ENCODE measurements at regions of chr12 and their contacts with region 1.

Region 1: GRCh38 chr12:42469355-42470175 is 120.0 kb downstream of the PRICKLE1 start:
- DNase-seq: peak; percentile 93
- ATAC-seq: peak; percentile 91
- H3K4me3 ChIP-seq: peak overlapping the region; percentile 23 to 45 (median 33)
- H3K4me3 Mint-ChIP-seq: peak overlapping the region; percentile 81
- H3K27ac ChIP-seq: peak overlapping the region; percentile 81 to 87
- H3K27ac Mint-ChIP-seq: peak overlapping the region; percentile 93
- H3K4me1 ChIP-seq: peaks cover 69 to 78% of the 10 kb centered on the region in 2 donors
- H3K4me1 Mint-ChIP-seq: peaks cover 76% of the 10 kb centered on the region
- H3K27me3 ChIP-seq: no peaks in the 10 kb centered on the region
- H3K27me3 Mint-ChIP-seq: no peaks in the 10 kb centered on the region
- CTCF ChIP-seq: no peak

Region 2: GRCh38 chr12:42144408-42145196 is 325.0 kb before region 1 on chr12 and contains the start of gene GXYLT1:
- CTCF ChIA-PET with region 1: interaction called, 3 read pairs
- POLR2A ChIA-PET with region 1: no interaction called
- intact Hi-C with region 1: loop called (anchors 5 kb)
- DNase-seq: peak; percentile 90
- ATAC-seq: peak; percentile 91
- H3K4me3 ChIP-seq: peak within 1 kb of the TSS; percentile 60 to 78 (median 74)
- H3K4me3 Mint-ChIP-seq: peak within 1 kb of the TSS; percentile 94
- H3K27ac ChIP-seq: peak within 1 kb of the TSS in 1 of 2 donors; percentile 68
- H3K27ac Mint-ChIP-seq: peak within 1 kb of the TSS; percentile 88
- H3K4me1 ChIP-seq: peaks cover 21 to 27% of the 10 kb centered on the region in 2 donors
- H3K4me1 Mint-ChIP-seq: peaks cover 40% of the 10 kb centered on the region
- H3K27me3 ChIP-seq: no peaks in the 10 kb centered on the region
- H3K27me3 Mint-ChIP-seq: no peaks in the 10 kb centered on the region
- CTCF ChIP-seq: no peak
- total RNA-seq, gene GXYLT1: 9.4 and 10.4 TPM in 2 replicates

Region 3: GRCh38 chr12:42237052-42237852 is 232.3 kb before region 1 on chr12:
- CTCF ChIA-PET with region 1: no interaction called
- POLR2A ChIA-PET with region 1: no interaction called
- intact Hi-C with region 1: loop called (anchors 5 kb)
- DNase-seq: peak; percentile 84
- ATAC-seq: peak; percentile 74
- H3K4me3 ChIP-seq: peak overlapping the region; percentile 48 to 84 (median 66)
- H3K4me3 Mint-ChIP-seq: peak overlapping the region; percentile 98
- H3K27ac ChIP-seq: peak overlapping the region; percentile 28 to 74
- H3K27ac Mint-ChIP-seq: peak overlapping the region; percentile 95
- H3K4me1 ChIP-seq: peaks cover 15 to 27% of the 10 kb centered on the region in 2 donors
- H3K4me1 Mint-ChIP-seq: peaks cover 35% of the 10 kb centered on the region
- H3K27me3 ChIP-seq: no peaks in the 10 kb centered on the region
- H3K27me3 Mint-ChIP-seq: no peaks in the 10 kb centered on the region
- CTCF ChIP-seq: peak; percentile 53

Region 4: DNA sequence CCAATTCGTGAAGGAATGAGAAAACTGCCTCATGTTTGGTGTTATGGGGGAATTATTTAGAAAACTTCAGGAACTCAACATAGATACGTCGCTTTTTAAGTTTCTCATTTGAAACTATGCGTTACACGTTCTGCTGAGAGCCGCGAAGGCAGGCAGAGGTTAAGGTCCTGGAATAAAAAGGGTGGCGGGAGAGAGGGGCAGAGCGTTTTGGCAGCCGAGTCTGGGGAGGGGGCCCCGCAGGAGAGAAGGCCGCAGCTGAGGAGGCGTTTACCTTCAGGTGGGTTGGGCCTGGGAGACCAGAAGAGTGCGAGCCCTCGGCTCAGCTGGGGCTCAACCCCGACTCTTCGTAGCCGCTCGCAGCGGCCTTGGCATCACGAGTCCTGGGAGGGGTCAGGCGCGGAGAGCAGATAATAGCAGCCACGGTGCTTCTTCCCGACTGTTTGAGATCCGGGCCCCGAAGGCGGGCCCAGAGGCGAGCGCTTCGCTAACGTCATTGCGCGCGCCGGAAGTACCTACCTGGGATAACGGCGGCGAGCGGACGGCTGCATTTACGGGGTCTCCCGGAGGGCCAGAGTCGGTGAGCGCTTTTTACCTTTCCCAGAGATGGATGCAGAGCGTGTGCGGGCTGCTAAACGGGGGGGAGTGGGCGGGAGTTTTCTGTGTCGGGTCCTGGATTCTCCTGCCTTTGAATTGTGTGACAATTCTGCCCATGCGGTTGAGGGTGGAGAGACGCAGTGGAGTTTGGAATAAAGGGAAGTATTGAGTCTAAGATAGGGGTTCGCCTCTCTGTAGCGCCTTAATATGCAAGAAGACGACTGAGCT is 143.7 kb before region 1 on chr12 and contains the starts of genes PPHLN1 and ZCRB1:
- CTCF ChIA-PET with region 1: no interaction called
- POLR2A ChIA-PET with region 1: no interaction called
- intact Hi-C with region 1: loop called (anchors 5 kb)
- DNase-seq: peak; percentile 87
- ATAC-seq: peak; percentile 88
- H3K4me3 ChIP-seq: peak within 1 kb of the TSS; percentile 60 to 98 (median 84)
- H3K4me3 Mint-ChIP-seq: peak within 1 kb of the TSS; percentile 95
- H3K27ac ChIP-seq: peak within 1 kb of the TSS; percentile 64 to 92
- H3K27ac Mint-ChIP-seq: peak within 1 kb of the TSS; percentile 96
- H3K4me1 ChIP-seq: peaks cover 29 to 39% of the 10 kb centered on the region in 2 donors
- H3K4me1 Mint-ChIP-seq: peaks cover 53% of the 10 kb centered on the region
- H3K27me3 ChIP-seq: no peaks in the 10 kb centered on the region
- H3K27me3 Mint-ChIP-seq: no peaks in the 10 kb centered on the region
- CTCF ChIP-seq: no peak
- total RNA-seq, gene PPHLN1: 99.5 and 104 TPM in 2 replicates
- total RNA-seq, gene ZCRB1: 23.2 and 27.1 TPM in 2 replicates

Region 5: GRCh38 chr12:42396473-42397259 is 72.9 kb before region 1 on chr12:
- CTCF ChIA-PET with region 1: no interaction called
- POLR2A ChIA-PET with region 1: no interaction called
- intact Hi-C with region 1: loop called (anchors 10 kb)
- DNase-seq: peak; percentile 17
- ATAC-seq: no peak
- H3K4me3 ChIP-seq: no peak overlapping the region
- H3K4me3 Mint-ChIP-seq: no peak overlapping the region
- H3K27ac ChIP-seq: peak overlapping the region in 1 of 2 donors; percentile 53
- H3K27ac Mint-ChIP-seq: peak overlapping the region; percentile 1
- H3K4me1 ChIP-seq: no peaks in the 10 kb centered on the region
- H3K4me1 Mint-ChIP-seq: peaks cover 16% of the 10 kb centered on the region
- H3K27me3 ChIP-seq: no peaks in the 10 kb centered on the region
- H3K27me3 Mint-ChIP-seq: no peaks in the 10 kb centered on the region
- CTCF ChIP-seq: no peak

Region 6: DNA sequence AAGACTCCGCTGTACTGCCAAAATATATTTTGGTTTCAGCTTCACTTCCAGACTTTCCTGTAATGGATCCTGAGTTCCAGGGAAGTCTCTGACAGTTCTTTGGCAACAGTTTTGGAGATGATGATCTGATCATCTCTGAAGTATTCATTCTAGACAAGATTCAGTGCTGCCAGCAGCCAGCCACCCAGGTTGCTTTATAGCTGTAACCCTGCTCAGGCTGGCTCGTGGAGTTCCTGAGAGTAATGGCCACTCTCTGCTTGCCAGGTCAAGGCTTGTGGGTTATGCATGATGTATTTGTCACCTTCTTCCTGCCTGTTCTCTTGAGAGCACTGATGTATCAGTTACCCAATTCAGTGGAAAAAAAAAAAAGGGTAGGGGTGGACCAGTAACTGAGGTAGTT is 19.3 kb before region 1 on chr12:
- CTCF ChIA-PET with region 1: interaction called, 4 read pairs
- POLR2A ChIA-PET with region 1: interaction called, 5 read pairs
- intact Hi-C with region 1: loop called (anchors 2 kb)
- DNase-seq: no peak
- ATAC-seq: no peak
- H3K4me3 ChIP-seq: no peak overlapping the region
- H3K4me3 Mint-ChIP-seq: no peak overlapping the region
- H3K27ac ChIP-seq: peak overlapping the region in 1 of 2 donors; percentile 21
- H3K27ac Mint-ChIP-seq: peak overlapping the region; percentile 66
- H3K4me1 ChIP-seq: peaks cover 75 to 81% of the 10 kb centered on the region in 2 donors
- H3K4me1 Mint-ChIP-seq: peaks cover 78% of the 10 kb centered on the region
- H3K27me3 ChIP-seq: no peaks in the 10 kb centered on the region
- H3K27me3 Mint-ChIP-seq: no peaks in the 10 kb centered on the region
- CTCF ChIP-seq: no peak

Region 7: GRCh38 chr12:43282106-43282505 is 812.5 kb after region 1 on chr12:
- CTCF ChIA-PET with region 1: no interaction called
- POLR2A ChIA-PET with region 1: no interaction called
- intact Hi-C with region 1: loop called (anchors 5 kb)
- DNase-seq: no peak
- ATAC-seq: no peak
- H3K4me3 ChIP-seq: no peak overlapping the region
- H3K4me3 Mint-ChIP-seq: no peak overlapping the region
- H3K27ac ChIP-seq: no peak overlapping the region
- H3K27ac Mint-ChIP-seq: no peak overlapping the region
- H3K4me1 ChIP-seq: peaks cover 18 to 21% of the 10 kb centered on the region in 2 donors
- H3K4me1 Mint-ChIP-seq: peaks cover 16% of the 10 kb centered on the region
- H3K27me3 ChIP-seq: no peaks in the 10 kb centered on the region
- H3K27me3 Mint-ChIP-seq: no peaks in the 10 kb centered on the region
- CTCF ChIP-seq: no peak

Measured in B cell (primary cell).